Calu3 (cell line): ENCODE measurements at regions of chr17 and their contacts with region 1.

Region 1: DNA sequence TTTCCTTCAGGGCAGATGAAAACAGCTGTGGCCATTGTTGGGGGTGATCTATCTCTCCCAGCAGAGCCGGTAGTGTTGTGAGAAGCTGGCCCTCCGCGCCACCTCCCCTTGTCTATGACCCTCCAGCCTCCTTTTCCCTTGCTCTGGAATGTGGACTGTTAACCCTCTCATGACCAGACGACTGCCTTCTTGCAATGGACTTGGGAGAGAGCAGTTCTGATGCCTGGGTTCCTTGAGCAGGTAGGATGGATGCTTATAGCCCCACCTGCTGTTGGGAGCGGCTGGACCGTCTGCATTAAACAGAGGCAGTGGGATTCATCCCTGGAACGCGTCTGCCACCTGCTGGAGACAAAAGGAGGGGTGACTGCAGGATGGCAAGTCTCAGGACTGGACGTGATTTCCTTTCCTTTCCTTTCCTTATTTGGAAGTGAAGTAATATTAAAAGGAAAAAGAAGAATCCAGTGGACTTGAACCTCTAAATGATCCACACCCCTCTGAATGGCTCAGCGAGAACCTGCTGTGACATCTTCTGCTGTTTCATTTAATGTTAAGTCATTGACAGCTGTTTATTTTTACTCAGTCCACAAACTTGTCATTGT is 1.8 kb upstream of the SOST start:
- DNase-seq: peak; percentile 98
- H3K4me3 Mint-ChIP-seq: no peak overlapping the region
- H3K27ac Mint-ChIP-seq: no peak overlapping the region
- H3K4me1 Mint-ChIP-seq: no peaks in the 10 kb centered on the region
- H3K27me3 Mint-ChIP-seq: peaks cover 49% of the 10 kb centered on the region
- CTCF ChIP-seq: peak; percentile 99

Region 2: GRCh38 chr17:43576563-43577229 is 183.7 kb before region 1 on chr17:
- CTCF ChIA-PET with region 1: interaction called, 4 read pairs
- intact Hi-C with region 1: loop called (anchors 2 kb)
- DNase-seq: peak; percentile 84
- H3K4me3 Mint-ChIP-seq: no peak overlapping the region
- H3K27ac Mint-ChIP-seq: no peak overlapping the region
- H3K4me1 Mint-ChIP-seq: peaks cover 37% of the 10 kb centered on the region
- H3K27me3 Mint-ChIP-seq: no peaks in the 10 kb centered on the region
- CTCF ChIP-seq: peak; percentile 95

Region 3: DNA sequence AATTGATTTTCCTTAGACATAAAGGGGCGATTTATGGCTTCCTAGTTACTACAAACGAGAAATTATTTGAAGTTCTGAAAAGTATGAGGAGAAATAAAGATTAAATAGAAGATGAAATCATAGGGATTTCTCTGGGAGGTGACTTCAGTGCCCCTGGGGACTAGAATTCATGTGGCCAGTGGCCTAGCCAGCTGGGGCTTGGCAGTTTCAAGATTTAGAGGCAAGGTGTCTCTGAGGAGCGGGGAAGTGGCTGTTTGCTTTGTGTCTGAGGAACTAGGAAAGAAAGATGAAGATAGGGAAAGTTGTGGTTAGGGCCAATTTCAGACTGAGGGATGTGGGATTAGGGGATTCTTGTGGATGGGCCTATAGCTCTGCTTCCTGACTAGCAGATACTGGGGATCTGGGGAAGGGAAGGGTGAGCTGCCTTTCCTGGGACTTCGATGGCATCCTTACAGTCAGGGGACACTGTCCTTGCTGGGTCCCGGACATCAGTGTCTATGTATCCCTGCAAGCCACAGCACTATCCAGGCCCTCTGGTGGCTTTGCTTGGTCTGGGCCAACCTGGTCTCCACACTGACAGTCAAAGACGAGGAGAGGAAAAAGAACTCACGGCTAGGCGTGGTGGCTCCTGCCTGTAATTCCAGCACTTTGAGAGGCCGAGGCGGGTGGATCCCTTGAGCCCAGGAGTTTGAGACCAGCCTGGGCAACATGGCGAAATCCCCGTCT is 76.3 kb before region 1 on chr17:
- CTCF ChIA-PET with region 1: interaction called, 16 read pairs
- intact Hi-C with region 1: no loop called
- DNase-seq: no peak
- H3K4me3 Mint-ChIP-seq: no peak overlapping the region
- H3K27ac Mint-ChIP-seq: no peak overlapping the region
- H3K4me1 Mint-ChIP-seq: peaks cover 14% of the 10 kb centered on the region
- H3K27me3 Mint-ChIP-seq: peaks cover 22% of the 10 kb centered on the region
- CTCF ChIP-seq: no peak

Region 4: GRCh38 chr17:43694077-43694870 is 66.1 kb before region 1 on chr17:
- CTCF ChIA-PET with region 1: interaction called, 43 read pairs
- intact Hi-C with region 1: loop called (anchors 1 kb)
- DNase-seq: peak; percentile 86
- H3K4me3 Mint-ChIP-seq: no peak overlapping the region
- H3K27ac Mint-ChIP-seq: no peak overlapping the region
- H3K4me1 Mint-ChIP-seq: no peaks in the 10 kb centered on the region
- H3K27me3 Mint-ChIP-seq: peaks cover 51% of the 10 kb centered on the region
- CTCF ChIP-seq: peak; percentile 97

Region 5: DNA sequence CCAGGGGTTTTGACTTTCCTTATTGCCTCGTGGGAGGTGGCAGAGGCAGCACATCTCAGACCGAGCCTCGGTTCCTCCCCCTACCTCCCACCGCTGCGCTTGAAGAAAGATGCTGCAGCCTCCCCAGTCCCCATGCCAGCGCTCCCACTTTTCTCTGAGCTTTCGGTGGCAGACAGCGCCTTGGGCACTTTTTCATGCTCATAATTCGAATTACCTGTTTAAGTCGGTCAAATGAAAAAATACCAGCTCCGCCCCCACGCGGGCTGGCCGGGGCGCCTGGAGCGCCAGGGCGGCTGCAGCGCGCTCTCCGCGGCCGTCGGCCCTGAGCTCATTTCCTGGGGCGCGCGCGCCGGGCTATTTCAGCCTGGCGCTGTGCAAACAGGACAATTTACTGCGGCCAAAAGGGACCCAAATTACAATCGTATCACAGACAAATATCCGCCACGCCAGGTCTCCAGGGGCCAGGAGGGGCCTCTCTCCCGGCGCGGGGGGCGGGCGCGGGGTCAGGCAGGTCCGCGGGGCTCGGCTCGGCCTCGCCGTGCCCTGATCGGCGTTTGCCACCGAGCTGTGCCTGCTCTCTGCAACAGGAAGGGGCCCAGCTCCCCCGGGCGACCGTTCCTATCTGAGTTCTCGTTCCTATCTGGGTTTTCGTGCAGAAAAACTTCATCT is 46.7 kb before region 1 on chr17:
- CTCF ChIA-PET with region 1: interaction called, 18 read pairs
- intact Hi-C with region 1: no loop called
- DNase-seq: peak; percentile 44
- H3K4me3 Mint-ChIP-seq: peak overlapping the region; percentile 48
- H3K27ac Mint-ChIP-seq: no peak overlapping the region
- H3K4me1 Mint-ChIP-seq: peaks cover 12% of the 10 kb centered on the region
- H3K27me3 Mint-ChIP-seq: peaks cover 97% of the 10 kb centered on the region
- CTCF ChIP-seq: no peak